ENCODE measurements at regions of chr5 and their contacts with region 1.

Region 1: GRCh38 chr5:41856644-41857491 is 13.4 kb downstream of the OXCT1 start:
- DNase-seq: no peak
- ATAC-seq: peak; percentile 98
- H3K4me3 ChIP-seq: no peak overlapping the region
- H3K27ac ChIP-seq: no peak overlapping the region
- H3K4me1 ChIP-seq: no peaks in the 10 kb centered on the region
- H3K27me3 ChIP-seq: no peaks in the 10 kb centered on the region
- CTCF ChIP-seq: peak; percentile 57 to 83 (median 75)
- EP300 ChIP-seq: no peak
- POLR2A ChIP-seq: no peak
- RAD21 ChIP-seq: peak; percentile 90

Region 2: DNA sequence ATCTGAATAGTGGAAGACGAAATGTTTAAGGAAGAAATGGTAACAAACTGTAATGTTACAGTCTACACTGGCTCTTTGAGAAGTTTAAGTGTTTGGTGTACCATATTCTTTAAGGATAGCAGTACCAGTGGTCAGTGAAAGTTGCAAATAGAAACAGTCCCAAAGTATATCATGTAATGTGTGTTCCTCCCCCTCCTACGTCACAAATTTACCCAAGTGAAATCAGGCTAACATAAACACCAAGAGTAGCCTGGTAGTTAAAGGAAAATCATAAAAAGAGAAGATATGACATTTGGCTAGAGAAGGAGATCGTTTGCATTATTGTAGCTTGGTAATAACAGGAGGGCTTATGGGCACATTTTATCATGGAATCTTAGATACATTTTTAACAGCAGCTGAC is 184.4 kb before region 1 on chr5:
- CTCF ChIA-PET with region 1: no interaction called
- POLR2A ChIA-PET with region 1: no interaction called
- RAD21 ChIA-PET with region 1: no interaction called
- SMC1A ChIA-PET with region 1: no interaction called
- in situ Hi-C with region 1: no loop called
- intact Hi-C with region 1: no loop called
- DNase-seq: no peak
- ATAC-seq: no peak
- H3K4me3 ChIP-seq: no peak overlapping the region
- H3K27ac ChIP-seq: no peak overlapping the region
- H3K4me1 ChIP-seq: no peaks in the 10 kb centered on the region
- H3K27me3 ChIP-seq: no peaks in the 10 kb centered on the region
- CTCF ChIP-seq: no peak
- EP300 ChIP-seq: no peak
- POLR2A ChIP-seq: no peak
- RAD21 ChIP-seq: no peak

Region 3: GRCh38 chr5:41793141-41793770 is 63.6 kb before region 1 on chr5:
- CTCF ChIA-PET with region 1: no interaction called
- POLR2A ChIA-PET with region 1: no interaction called
- RAD21 ChIA-PET with region 1: no interaction called
- SMC1A ChIA-PET with region 1: no interaction called
- in situ Hi-C with region 1: no loop called
- intact Hi-C with region 1: no loop called
- DNase-seq: no peak
- ATAC-seq: no peak
- H3K4me3 ChIP-seq: no peak overlapping the region
- H3K27ac ChIP-seq: no peak overlapping the region
- H3K4me1 ChIP-seq: no peaks in the 10 kb centered on the region
- H3K27me3 ChIP-seq: no peaks in the 10 kb centered on the region
- CTCF ChIP-seq: no peak
- EP300 ChIP-seq: no peak
- POLR2A ChIP-seq: no peak
- RAD21 ChIP-seq: no peak

Region 4: GRCh38 chr5:41869739-41870626 is 13.1 kb after region 1 on chr5 and contains the start of gene OXCT1:
- CTCF ChIA-PET with region 1: interaction called, 57 read pairs
- POLR2A ChIA-PET with region 1: no interaction called
- RAD21 ChIA-PET with region 1: interaction called, 9 read pairs
- SMC1A ChIA-PET with region 1: interaction called, 8 read pairs
- in situ Hi-C with region 1: no loop called
- intact Hi-C with region 1: no loop called
- DNase-seq: peak; percentile 45
- ATAC-seq: peak; percentile 95
- H3K4me3 ChIP-seq: peak within 1 kb of the TSS; percentile 79
- H3K27ac ChIP-seq: peak within 1 kb of the TSS; percentile 89
- H3K4me1 ChIP-seq: peaks cover 6% of the 10 kb centered on the region
- H3K27me3 ChIP-seq: no peaks in the 10 kb centered on the region
- CTCF ChIP-seq: no peak
- EP300 ChIP-seq: no peak
- POLR2A ChIP-seq: peak; percentile 98
- RAD21 ChIP-seq: no peak
- polyA plus RNA-seq, gene OXCT1: 46.9 to 61.3 TPM

Region 5: DNA sequence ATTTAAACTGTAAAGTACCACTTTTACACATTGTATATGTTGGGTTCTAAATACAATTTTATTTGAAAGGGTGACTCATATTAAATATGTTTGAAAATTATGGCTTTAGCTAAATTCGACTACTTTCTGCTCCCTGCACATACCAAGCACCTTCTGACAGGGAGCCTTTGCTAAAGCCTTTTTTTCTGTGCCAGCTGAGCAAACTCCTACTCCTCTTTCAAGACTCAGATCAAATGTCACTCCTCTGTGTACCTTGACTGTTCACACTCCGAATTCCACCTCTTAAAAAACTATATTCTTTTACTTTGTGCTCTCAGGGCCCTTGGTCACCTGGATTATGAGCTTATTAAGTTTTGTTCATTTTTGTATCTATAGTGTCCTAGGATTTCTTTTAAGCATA is 19.8 kb after region 1 on chr5:
- CTCF ChIA-PET with region 1: interaction called, 11 read pairs
- POLR2A ChIA-PET with region 1: no interaction called
- RAD21 ChIA-PET with region 1: interaction called, 4 read pairs
- SMC1A ChIA-PET with region 1: interaction called, 5 read pairs
- in situ Hi-C with region 1: no loop called
- intact Hi-C with region 1: no loop called
- DNase-seq: no peak
- ATAC-seq: no peak
- H3K4me3 ChIP-seq: no peak overlapping the region
- H3K27ac ChIP-seq: no peak overlapping the region
- H3K4me1 ChIP-seq: peaks cover 6% of the 10 kb centered on the region; the same call in 1 of the 2 replicates
- H3K27me3 ChIP-seq: no peaks in the 10 kb centered on the region
- CTCF ChIP-seq: no peak
- EP300 ChIP-seq: no peak
- POLR2A ChIP-seq: no peak
- RAD21 ChIP-seq: no peak

Region 6: GRCh38 chr5:41924872-41925554 is 68.1 kb after region 1 on chr5 and contains the start of gene FBXO4:
- CTCF ChIA-PET with region 1: interaction called, 7 read pairs
- POLR2A ChIA-PET with region 1: no interaction called
- RAD21 ChIA-PET with region 1: interaction called, 10 read pairs
- SMC1A ChIA-PET with region 1: interaction called, 16 read pairs
- in situ Hi-C with region 1: no loop called
- intact Hi-C with region 1: no loop called
- DNase-seq: peak; percentile 63
- ATAC-seq: peak; percentile 96
- H3K4me3 ChIP-seq: peak within 1 kb of the TSS; percentile 84
- H3K27ac ChIP-seq: peak within 1 kb of the TSS; percentile 97
- H3K4me1 ChIP-seq: peaks cover 21% of the 10 kb centered on the region
- H3K27me3 ChIP-seq: no peaks in the 10 kb centered on the region
- CTCF ChIP-seq: peak; percentile 58 to 82 (median 74)
- EP300 ChIP-seq: no peak; a peak in 1 of 4 replicates
- POLR2A ChIP-seq: peak; percentile 96
- RAD21 ChIP-seq: peak; percentile 47; the same call in 1 of the 2 replicates
- polyA plus RNA-seq, gene FBXO4: 7.2 to 13.8 TPM

Region 7: GRCh38 chr5:42005561-42006153 is 148.8 kb after region 1 on chr5:
- CTCF ChIA-PET with region 1: interaction called, 47 read pairs
- POLR2A ChIA-PET with region 1: no interaction called
- RAD21 ChIA-PET with region 1: interaction called, 11 read pairs
- SMC1A ChIA-PET with region 1: interaction called, 8 read pairs
- in situ Hi-C with region 1: no loop called
- intact Hi-C with region 1: loop called (anchors 2 kb)
- DNase-seq: no peak
- ATAC-seq: peak; percentile 79
- H3K4me3 ChIP-seq: no peak overlapping the region
- H3K27ac ChIP-seq: no peak overlapping the region
- H3K4me1 ChIP-seq: no peaks in the 10 kb centered on the region
- H3K27me3 ChIP-seq: no peaks in the 10 kb centered on the region
- CTCF ChIP-seq: peak; percentile 48 to 72 (median 66)
- EP300 ChIP-seq: no peak
- POLR2A ChIP-seq: no peak
- RAD21 ChIP-seq: peak; percentile 55

Region 8: DNA sequence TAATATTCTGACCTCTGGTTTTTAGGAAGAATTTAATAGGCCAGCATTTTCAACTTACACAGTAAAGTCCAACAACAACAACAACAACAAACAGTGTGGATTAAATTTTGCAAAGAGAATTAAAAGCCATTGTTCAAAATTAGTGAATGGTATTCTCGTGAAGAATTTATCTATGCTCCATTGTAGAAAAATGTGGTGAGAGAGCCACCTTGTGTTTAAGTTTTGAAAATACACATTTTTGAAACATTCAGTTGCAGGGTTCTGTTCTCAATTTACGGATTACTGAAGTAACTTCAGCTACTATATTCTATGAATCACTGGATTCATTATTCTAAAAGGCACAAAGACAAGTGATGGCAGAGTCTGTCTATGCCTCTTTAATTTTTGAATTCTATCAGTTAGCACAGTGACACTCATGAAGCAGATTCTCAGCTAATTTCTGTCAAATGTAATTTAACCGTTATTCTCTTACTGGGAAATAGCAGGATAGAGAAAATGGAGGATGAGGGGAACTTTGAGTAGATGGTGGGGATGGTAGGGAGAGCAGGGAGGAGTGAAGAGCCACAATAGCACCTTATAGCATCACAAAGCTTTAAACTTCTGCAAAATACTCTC is 910.7 kb after region 1 on chr5:
- CTCF ChIA-PET with region 1: interaction called, 9 read pairs
- POLR2A ChIA-PET with region 1: no interaction called
- RAD21 ChIA-PET with region 1: interaction called, 16 read pairs
- SMC1A ChIA-PET with region 1: interaction called, 5 read pairs
- in situ Hi-C with region 1: loop called (anchors 10 kb)
- intact Hi-C with region 1: loop called (anchors 5 kb)
- DNase-seq: no peak
- ATAC-seq: peak; percentile 53
- H3K4me3 ChIP-seq: no peak overlapping the region
- H3K27ac ChIP-seq: no peak overlapping the region
- H3K4me1 ChIP-seq: no peaks in the 10 kb centered on the region
- H3K27me3 ChIP-seq: no peaks in the 10 kb centered on the region
- CTCF ChIP-seq: peak; percentile 31 to 56 (median 42); a peak in 4 of 6 replicates
- EP300 ChIP-seq: no peak
- POLR2A ChIP-seq: no peak
- RAD21 ChIP-seq: peak; percentile 70

Measured in GM12878 (cell line).